ENCODE measurements at regions of chr19 and their contacts with region 1.

Region 1: GRCh38 chr19:2457394-2458037 is 757 bp upstream of the LMNB2 start:
- DNase-seq: no peak
- H3K4me3 ChIP-seq: peak overlapping the region; percentile 34 to 61
- H3K27ac ChIP-seq: peak overlapping the region; percentile 50 to 74
- H3K4me1 ChIP-seq: peaks cover 14 to 22% of the 10 kb centered on the region in 2 donors
- H3K27me3 ChIP-seq: no peaks in the 10 kb centered on the region
- CTCF ChIP-seq: no peak

Region 2: GRCh38 chr19:2391118-2391725 is 66.3 kb before region 1 on chr19:
- intact Hi-C with region 1: no loop called
- DNase-seq: no peak
- H3K4me3 ChIP-seq: no peak overlapping the region
- H3K27ac ChIP-seq: no peak overlapping the region
- H3K4me1 ChIP-seq: no peaks in the 10 kb centered on the region
- H3K27me3 ChIP-seq: no peaks in the 10 kb centered on the region
- CTCF ChIP-seq: peak; percentile 62 to 83 (median 74)

Region 3: GRCh38 chr19:2427429-2428320 is 29.8 kb before region 1 on chr19 and contains the start of gene TIMM13:
- intact Hi-C with region 1: loop called (anchors 1 kb)
- DNase-seq: peak; percentile 88 to 98
- H3K4me3 ChIP-seq: peak within 1 kb of the TSS; percentile 69 to 77
- H3K27ac ChIP-seq: peak within 1 kb of the TSS; percentile 86 to 95
- H3K4me1 ChIP-seq: peaks cover 19 to 25% of the 10 kb centered on the region in 2 donors
- H3K27me3 ChIP-seq: no peaks in the 10 kb centered on the region
- CTCF ChIP-seq: no peak
- total RNA-seq, gene TIMM13: 55.0 TPM

Region 4: DNA sequence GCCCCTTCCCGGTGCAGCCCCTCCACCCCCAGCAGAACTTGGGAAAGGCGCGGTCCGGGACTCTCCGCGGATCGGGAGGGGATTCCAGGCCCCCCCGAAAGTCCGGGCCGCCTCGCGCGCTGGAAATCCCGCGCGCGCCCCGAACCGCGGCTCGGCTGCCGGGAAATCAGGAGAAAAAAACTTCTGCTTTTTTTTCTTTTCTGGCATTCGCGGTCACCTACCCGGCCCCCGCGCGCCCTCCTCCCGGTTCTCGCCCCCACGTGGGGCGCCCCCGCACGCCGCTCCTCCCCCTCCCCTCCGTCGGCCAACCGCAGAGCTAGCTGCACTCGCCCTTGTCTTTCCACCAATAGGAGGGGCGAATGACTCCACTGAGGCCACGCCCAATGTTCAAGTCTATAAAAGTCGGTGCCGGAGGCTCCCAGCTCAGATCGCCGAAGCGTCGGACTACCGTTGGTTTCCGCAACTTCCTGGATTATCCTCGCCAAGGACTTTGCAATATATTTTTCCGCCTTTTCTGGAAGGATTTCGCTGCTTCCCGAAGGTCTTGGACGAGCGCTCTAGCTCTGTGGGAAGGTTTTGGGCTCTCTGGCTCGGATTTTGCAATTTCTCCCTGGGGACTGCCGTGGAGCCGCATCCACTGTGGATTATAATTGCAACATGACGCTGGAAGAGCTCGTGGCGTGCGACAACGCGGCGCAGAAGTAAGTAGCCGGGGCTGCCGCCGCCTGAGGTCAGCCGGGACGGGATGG is 18.4 kb after region 1 on chr19 and contains the start of gene GADD45B:
- intact Hi-C with region 1: no loop called
- DNase-seq: peak; percentile 89 to 99
- H3K4me3 ChIP-seq: peak within 1 kb of the TSS; percentile 94 to 98
- H3K27ac ChIP-seq: peak within 1 kb of the TSS; percentile 88 to 95
- H3K4me1 ChIP-seq: peaks cover 3 to 16% of the 10 kb centered on the region in 2 donors
- H3K27me3 ChIP-seq: no peaks in the 10 kb centered on the region
- CTCF ChIP-seq: peak in 1 of 3 experiments; percentile 19
- total RNA-seq, gene GADD45B: 514 TPM